ENCODE measurements at regions of chr9 and their contacts with region 1.

Region 1: DNA sequence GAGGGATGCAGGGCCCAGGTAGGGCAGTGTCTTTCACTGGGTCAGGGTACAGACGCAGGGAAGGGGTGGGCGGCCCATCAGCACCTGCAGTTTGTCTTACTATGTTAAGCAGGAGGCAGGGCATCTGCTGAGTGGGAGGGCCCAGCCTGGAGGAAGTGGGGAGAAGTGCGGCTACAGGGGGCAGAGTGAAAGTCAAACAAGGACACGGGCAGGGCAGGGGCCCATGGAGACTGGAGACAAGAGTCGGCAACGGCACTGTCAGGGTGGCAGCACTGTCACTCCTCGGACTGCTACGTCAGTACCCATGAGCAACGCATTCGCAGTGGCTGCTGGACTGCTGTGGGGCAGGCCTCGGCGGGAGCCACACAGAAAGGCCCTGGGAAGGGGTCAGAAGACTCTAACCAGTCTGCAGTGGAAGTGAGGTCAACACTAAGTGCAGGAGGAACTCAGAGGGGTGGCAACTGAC is 19.7 kb downstream of the CAMSAP1 start:
- DNase-seq: peak; percentile 40 to 75 (median 66)
- ATAC-seq: peak; percentile 91
- H3K4me3 ChIP-seq: peak overlapping the region; percentile 38
- H3K4me3 Mint-ChIP-seq: peak overlapping the region; percentile 68 to 94 (median 84)
- H3K27ac ChIP-seq: peak overlapping the region; percentile 69
- H3K27ac Mint-ChIP-seq: peak overlapping the region; percentile 66 to 96 (median 88)
- H3K4me1 ChIP-seq: peaks cover 11 to 23% of the 10 kb centered on the region in 2 donors
- H3K4me1 Mint-ChIP-seq: peaks cover 46 to 87% (median 77%) of the 10 kb centered on the region in 7 donors
- H3K27me3 ChIP-seq: no peaks in the 10 kb centered on the region
- H3K27me3 Mint-ChIP-seq: no peaks in the 10 kb centered on the region

Region 2: GRCh38 chr9:135864447-135865049 is 23.1 kb before region 1 on chr9:
- CTCF ChIA-PET with region 1: interaction called, 4 read pairs
- POLR2A ChIA-PET with region 1: no interaction called
- intact Hi-C with region 1: loop called in 1 of 2 experiments (anchors 2 kb)
- DNase-seq: peak; percentile 20 to 70 (median 55)
- ATAC-seq: peak; percentile 74
- H3K4me3 ChIP-seq: no peak overlapping the region
- H3K4me3 Mint-ChIP-seq: no peak overlapping the region
- H3K27ac ChIP-seq: no peak overlapping the region
- H3K27ac Mint-ChIP-seq: no peak overlapping the region
- H3K4me1 ChIP-seq: peaks cover 0 to 4% of the 10 kb centered on the region in 2 donors
- H3K4me1 Mint-ChIP-seq: peaks cover 5 to 26% (median 17%) of the 10 kb centered on the region in 7 donors
- H3K27me3 ChIP-seq: no peaks in the 10 kb centered on the region
- H3K27me3 Mint-ChIP-seq: no peaks in the 10 kb centered on the region